Heart left ventricle (tissue), 16 donors: ENCODE measurements at regions of chr2 and their contacts with region 1.

Region 1: DNA sequence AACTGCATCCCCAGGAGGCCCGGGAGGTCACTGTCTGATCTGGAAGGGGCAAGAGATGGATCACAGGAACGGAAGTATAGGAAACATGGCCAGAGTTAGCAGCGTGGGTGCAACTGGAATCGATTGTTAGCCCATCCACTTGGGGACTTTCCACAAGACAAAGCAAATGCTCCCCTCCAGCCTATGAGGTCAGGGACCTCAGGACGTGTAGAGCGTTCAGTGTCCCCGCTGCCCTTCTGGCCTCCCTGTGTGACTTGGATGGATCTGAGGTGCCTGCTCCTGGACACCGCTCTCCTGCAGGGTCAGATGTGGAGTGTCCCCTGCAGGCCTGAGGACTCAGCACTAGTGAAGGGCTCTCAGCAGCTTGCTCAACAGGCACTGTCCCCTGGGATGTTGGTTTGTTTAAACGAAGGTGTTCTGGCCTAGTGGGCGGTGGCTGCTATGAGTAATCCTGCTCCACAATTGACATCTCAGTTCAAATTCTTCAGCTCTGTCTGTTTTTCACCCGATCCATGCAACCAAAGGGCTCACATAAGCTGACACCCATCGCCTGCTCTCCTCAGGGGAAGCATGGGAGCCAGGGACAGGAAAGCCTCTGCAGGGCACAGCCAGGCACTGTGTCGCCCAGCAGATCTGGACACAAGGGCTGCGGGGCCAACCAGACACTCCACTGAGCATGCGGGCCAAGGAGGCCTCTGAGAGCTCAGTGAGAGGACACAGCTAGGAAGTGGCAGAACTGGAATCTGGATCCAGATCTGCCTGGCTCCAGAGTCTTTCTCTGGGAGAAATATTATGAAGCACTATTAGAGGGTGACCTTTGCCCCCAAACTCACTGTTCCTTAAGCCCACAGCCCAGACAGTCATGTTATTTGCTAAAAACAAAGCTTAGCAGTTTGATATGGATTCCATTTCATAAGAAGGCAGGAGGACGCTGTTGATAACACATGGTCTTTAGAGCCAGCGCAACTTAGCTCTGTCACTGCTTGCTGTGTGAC is 78.5 kb downstream of the RHOB start:
- DNase-seq: peak in 4 of 5 donors; percentile 38 to 74 (median 58)
- ATAC-seq: peak; percentile 63 to 78 (median 68)
- H3K4me3 ChIP-seq: no peak overlapping the region
- H3K27ac ChIP-seq: peak overlapping the region; percentile 15 to 80 (median 68)
- H3K4me1 ChIP-seq: peaks cover 4 to 66% (median 44%) of the 10 kb centered on the region in 12 donors
- H3K27me3 ChIP-seq: no peaks in the 10 kb centered on the region
- CTCF ChIP-seq: peak in 1 of 12 donors; percentile 9
- POLR2A ChIP-seq: no peak

Region 2: GRCh38 chr2:20299113-20299512 is 226.2 kb before region 1 on chr2:
- intact Hi-C with region 1: no loop called
- DNase-seq: no peak
- ATAC-seq: peak in 3 of 4 donors; percentile 18 to 59 (median 22)
- H3K4me3 ChIP-seq: no peak overlapping the region
- H3K27ac ChIP-seq: no peak overlapping the region
- H3K4me1 ChIP-seq: no peaks in the 10 kb centered on the region
- H3K27me3 ChIP-seq: no peaks in the 10 kb centered on the region
- CTCF ChIP-seq: no peak
- POLR2A ChIP-seq: no peak

Region 3: GRCh38 chr2:20446917-20447436 is 78.4 kb before region 1 on chr2 and contains the start of gene RHOB:
- intact Hi-C with region 1: loop called in 8 of 10 experiments (anchors 2 to 10 kb)
- DNase-seq: peak; percentile 96 to 98 (median 98)
- ATAC-seq: peak; percentile 87 to 94 (median 88)
- H3K4me3 ChIP-seq: peak within 1 kb of the TSS; percentile 77 to 99 (median 95)
- H3K27ac ChIP-seq: peak within 1 kb of the TSS; percentile 94 to 100 (median 98)
- H3K4me1 ChIP-seq: peaks cover 0 to 58% (median 36%) of the 10 kb centered on the region in 12 donors
- H3K27me3 ChIP-seq: no peaks in the 10 kb centered on the region
- CTCF ChIP-seq: no peak
- POLR2A ChIP-seq: peak; percentile 2 to 100
- total RNA-seq, gene RHOB: 105 to 429 (median 169) TPM

Region 4: DNA sequence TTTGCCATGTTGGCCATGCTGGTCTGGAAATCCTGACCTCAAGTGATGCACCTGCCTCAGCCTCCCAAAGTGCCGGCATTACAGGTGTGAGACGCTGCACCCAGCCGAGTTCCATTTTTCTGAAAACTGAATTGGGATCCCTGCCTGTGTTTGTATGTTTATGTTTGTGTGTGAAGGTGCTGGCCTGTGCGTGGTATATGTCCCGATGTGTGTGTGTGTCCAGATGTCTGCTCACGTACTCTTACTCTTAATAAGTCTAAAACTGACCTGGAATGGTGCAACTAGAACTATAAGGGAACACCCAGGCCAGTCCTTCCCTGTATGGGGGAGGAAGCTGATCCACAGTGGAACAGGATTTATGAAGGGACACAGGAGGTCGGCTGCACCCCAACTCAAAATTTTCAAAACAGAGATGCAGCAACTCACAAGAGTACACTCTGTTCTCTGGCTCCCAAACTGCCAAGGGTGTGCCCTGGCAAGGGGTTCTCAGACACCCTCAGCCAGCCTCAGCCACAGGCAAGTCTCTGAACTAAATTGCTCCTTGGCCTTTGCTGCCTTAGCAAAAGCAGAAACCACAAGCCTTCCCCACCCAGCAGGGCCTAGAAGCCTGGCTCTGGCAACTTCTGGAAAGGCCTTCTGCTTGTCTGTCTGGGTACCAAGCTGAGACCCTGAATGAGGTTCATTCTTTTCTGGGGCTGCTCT is 42.0 kb before region 1 on chr2:
- intact Hi-C with region 1: loop called in 2 of 10 experiments (anchors 5 kb)
- DNase-seq: peak in 2 of 5 donors; percentile 48 to 52
- ATAC-seq: peak; percentile 28 to 78 (median 48)
- H3K4me3 ChIP-seq: no peak overlapping the region
- H3K27ac ChIP-seq: peak overlapping the region in 6 of 12 donors; percentile 9 to 66 (median 23)
- H3K4me1 ChIP-seq: peaks cover 0 to 24% (median 8%) of the 10 kb centered on the region in 12 donors
- H3K27me3 ChIP-seq: no peaks in the 10 kb centered on the region
- CTCF ChIP-seq: no peak
- POLR2A ChIP-seq: no peak

Region 5: GRCh38 chr2:20578895-20579825 is 53.8 kb after region 1 on chr2:
- intact Hi-C with region 1: loop called in 5 of 10 experiments (anchors 2 to 5 kb)
- DNase-seq: peak; percentile 78 to 95 (median 90)
- ATAC-seq: peak; percentile 88 to 92 (median 92)
- H3K4me3 ChIP-seq: peak overlapping the region in 1 of 12 donors; percentile 1
- H3K27ac ChIP-seq: peak overlapping the region; percentile 57 to 94 (median 86)
- H3K4me1 ChIP-seq: peaks cover 13 to 82% (median 63%) of the 10 kb centered on the region in 12 donors
- H3K27me3 ChIP-seq: no peaks in the 10 kb centered on the region
- CTCF ChIP-seq: no peak
- POLR2A ChIP-seq: peak in 1 of 2 donors; percentile 8

Region 6: DNA sequence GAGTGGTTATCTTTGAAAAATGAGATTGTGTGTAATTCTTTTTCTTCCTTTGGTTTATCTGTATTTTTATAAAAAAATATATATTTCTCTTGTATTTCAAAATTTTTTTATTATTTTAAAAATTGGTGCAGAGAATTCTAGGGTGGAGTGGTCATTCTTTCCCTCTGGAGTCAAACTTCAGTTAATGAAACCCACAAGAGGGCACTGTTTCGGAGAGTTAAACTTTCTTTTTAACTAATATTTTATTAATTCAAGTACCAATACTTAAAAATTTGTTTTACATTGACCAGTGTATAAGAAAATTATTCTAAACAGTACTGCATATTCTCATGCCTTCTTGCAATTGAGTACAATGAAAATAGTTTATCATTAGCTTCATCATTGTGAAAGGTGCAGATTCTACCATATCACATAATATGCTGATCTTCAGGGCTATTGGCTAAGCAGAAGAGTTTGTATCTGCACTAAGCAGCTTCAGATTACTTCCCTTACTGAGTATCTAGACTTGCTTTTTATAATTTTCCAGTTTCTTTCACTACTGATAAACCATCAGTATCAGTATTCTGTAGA is 75.5 kb after region 1 on chr2:
- intact Hi-C with region 1: loop called in 2 of 10 experiments (anchors 1 to 5 kb)
- DNase-seq: no peak
- ATAC-seq: no peak
- H3K4me3 ChIP-seq: no peak overlapping the region
- H3K27ac ChIP-seq: peak overlapping the region in 10 of 12 donors; percentile 23 to 92 (median 80)
- H3K4me1 ChIP-seq: peaks cover 13 to 73% (median 55%) of the 10 kb centered on the region in 12 donors
- H3K27me3 ChIP-seq: no peaks in the 10 kb centered on the region
- CTCF ChIP-seq: peak; percentile 22 to 64 (median 48)
- POLR2A ChIP-seq: no peak

Region 7: GRCh38 chr2:20625491-20626391 is 100.4 kb after region 1 on chr2:
- intact Hi-C with region 1: loop called in 3 of 10 experiments (anchors 5 kb)
- DNase-seq: peak in 4 of 5 donors; percentile 60 to 81 (median 72)
- ATAC-seq: peak; percentile 19 to 71 (median 52)
- H3K4me3 ChIP-seq: no peak overlapping the region
- H3K27ac ChIP-seq: peak overlapping the region; percentile 54 to 99 (median 84)
- H3K4me1 ChIP-seq: peaks cover 0 to 68% (median 49%) of the 10 kb centered on the region in 12 donors
- H3K27me3 ChIP-seq: no peaks in the 10 kb centered on the region
- CTCF ChIP-seq: peak in 8 of 12 donors; percentile 10 to 40 (median 32)
- POLR2A ChIP-seq: no peak

Region 8: GRCh38 chr2:21103274-21103891 is 578.0 kb after region 1 on chr2:
- intact Hi-C with region 1: no loop called
- DNase-seq: no peak
- ATAC-seq: no peak
- H3K4me3 ChIP-seq: no peak overlapping the region
- H3K27ac ChIP-seq: no peak overlapping the region
- H3K4me1 ChIP-seq: peaks cover 0 to 7% (median 0%) of the 10 kb centered on the region in 12 donors
- H3K27me3 ChIP-seq: no peaks in the 10 kb centered on the region
- CTCF ChIP-seq: no peak
- POLR2A ChIP-seq: no peak